ENCODE measurements at regions of chr12 and their contacts with region 1.

Region 1: DNA sequence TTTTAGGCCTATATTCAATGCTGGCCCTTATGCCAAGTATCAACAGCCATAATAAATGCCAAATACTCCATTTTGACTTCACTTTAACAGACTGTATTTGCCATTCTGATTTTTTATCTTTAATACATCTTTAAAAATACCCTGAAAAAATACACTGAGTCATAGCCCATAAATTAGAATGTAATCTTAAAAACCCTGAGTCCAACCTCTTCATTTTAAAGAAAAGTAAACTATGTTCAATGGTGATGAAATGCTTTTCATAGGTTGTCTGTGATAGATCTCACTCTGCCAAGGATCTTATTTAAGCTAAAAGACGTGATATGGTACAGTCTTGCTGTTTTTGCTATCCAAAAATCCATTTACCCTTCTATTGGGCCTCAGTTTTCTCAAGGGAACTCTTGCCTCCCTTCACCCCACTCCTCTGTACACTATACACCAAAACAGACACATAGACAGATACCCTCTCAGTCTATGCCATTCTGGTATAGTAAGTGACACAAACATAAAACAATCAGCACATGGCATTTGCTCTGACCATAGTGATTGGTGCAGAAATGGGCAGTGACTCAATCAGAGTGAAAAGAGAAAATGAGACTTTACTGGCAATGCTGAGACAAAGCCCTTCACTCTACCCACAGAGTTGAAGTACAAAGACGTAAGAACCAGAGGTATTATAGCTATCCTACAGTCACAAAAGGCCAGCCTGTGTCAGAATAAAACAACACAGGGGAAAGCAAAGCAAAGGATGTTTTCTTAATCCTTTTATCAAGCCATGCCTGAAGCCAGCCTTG is 49.1 kb downstream of the BTG1 start:
- DNase-seq: peak in 1 of 10 donors; percentile 26
- ATAC-seq: peak; percentile 66 to 70
- H3K4me3 Mint-ChIP-seq: peak overlapping the region in 9 of 10 donors; percentile 2 to 63 (median 31)
- H3K27ac Mint-ChIP-seq: peak overlapping the region; percentile 17 to 94 (median 78)
- H3K4me1 Mint-ChIP-seq: peaks cover 21 to 69% (median 57%) of the 10 kb centered on the region in 4 donors
- H3K27me3 Mint-ChIP-seq: no peaks in the 10 kb centered on the region

Region 2: GRCh38 chr12:91926848-91927247 is 169.7 kb before region 1 on chr12:
- POLR2A ChIA-PET with region 1: no interaction called
- DNase-seq: no peak
- ATAC-seq: no peak
- H3K4me3 Mint-ChIP-seq: no peak overlapping the region
- H3K27ac Mint-ChIP-seq: peak overlapping the region in 1 of 10 donors; percentile 47
- H3K4me1 Mint-ChIP-seq: peaks cover 11 to 21% (median 19%) of the 10 kb centered on the region in 4 donors
- H3K27me3 Mint-ChIP-seq: no peaks in the 10 kb centered on the region

Region 3: GRCh38 chr12:92049403-92049802 is 47.1 kb before region 1 on chr12:
- POLR2A ChIA-PET with region 1: no interaction called
- DNase-seq: no peak
- ATAC-seq: no peak
- H3K4me3 Mint-ChIP-seq: no peak overlapping the region
- H3K27ac Mint-ChIP-seq: peak overlapping the region in 4 of 10 donors; percentile 1 to 68 (median 39)
- H3K4me1 Mint-ChIP-seq: peaks cover 23 to 65% (median 59%) of the 10 kb centered on the region in 4 donors
- H3K27me3 Mint-ChIP-seq: no peaks in the 10 kb centered on the region

Region 4: GRCh38 chr12:92108651-92109050 is 12.1 kb after region 1 on chr12:
- POLR2A ChIA-PET with region 1: interaction called, 10 read pairs
- DNase-seq: no peak
- ATAC-seq: no peak
- H3K4me3 Mint-ChIP-seq: peak overlapping the region in 9 of 10 donors; percentile 17 to 85 (median 68)
- H3K27ac Mint-ChIP-seq: peak overlapping the region; percentile 36 to 93 (median 86)
- H3K4me1 Mint-ChIP-seq: peaks cover 48 to 87% (median 83%) of the 10 kb centered on the region in 4 donors
- H3K27me3 Mint-ChIP-seq: no peaks in the 10 kb centered on the region

Measured in naive thymus-derived CD8-positive, alpha-beta T cell (primary cell).